Mucosa of descending colon (tissue), 3 donors: ENCODE measurements at regions of chr19 and their contacts with region 1.

Region 1: DNA sequence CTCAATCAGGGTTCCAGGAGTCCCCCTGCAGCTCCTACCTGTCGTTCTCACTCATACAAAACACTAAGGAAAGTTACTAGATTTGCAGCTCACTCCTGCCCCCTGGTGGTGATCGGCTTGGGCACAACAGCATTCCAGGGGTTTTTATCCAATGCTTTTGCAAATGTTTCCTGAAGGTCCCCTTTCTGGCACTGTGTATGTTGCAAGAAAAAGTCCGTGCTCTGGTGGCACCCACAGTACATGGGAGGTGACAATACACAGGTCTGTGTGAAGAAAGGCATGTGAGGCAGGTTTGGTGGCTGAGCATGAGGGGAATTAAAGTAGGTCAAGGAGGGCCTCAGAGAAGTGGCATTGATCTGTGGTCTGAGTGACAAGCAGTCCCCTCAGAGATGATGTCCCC is 8.6 kb upstream of the TYK2 start:
- DNase-seq: peak; percentile 78 to 99 (median 89)
- ATAC-seq: peak; percentile 87
- H3K4me3 ChIP-seq: no peak overlapping the region
- H3K4me1 ChIP-seq: no peaks in the 10 kb centered on the region
- CTCF ChIP-seq: peak; percentile 86

Region 2: GRCh38 chr19:10269333-10270179 is 119.4 kb before region 1 on chr19:
- intact Hi-C with region 1: loop called (anchors 2 kb)
- DNase-seq: peak; percentile 91 to 94 (median 92)
- ATAC-seq: peak; percentile 83
- H3K4me3 ChIP-seq: no peak overlapping the region
- H3K4me1 ChIP-seq: peaks cover 15% of the 10 kb centered on the region
- CTCF ChIP-seq: peak; percentile 83

Region 3: DNA sequence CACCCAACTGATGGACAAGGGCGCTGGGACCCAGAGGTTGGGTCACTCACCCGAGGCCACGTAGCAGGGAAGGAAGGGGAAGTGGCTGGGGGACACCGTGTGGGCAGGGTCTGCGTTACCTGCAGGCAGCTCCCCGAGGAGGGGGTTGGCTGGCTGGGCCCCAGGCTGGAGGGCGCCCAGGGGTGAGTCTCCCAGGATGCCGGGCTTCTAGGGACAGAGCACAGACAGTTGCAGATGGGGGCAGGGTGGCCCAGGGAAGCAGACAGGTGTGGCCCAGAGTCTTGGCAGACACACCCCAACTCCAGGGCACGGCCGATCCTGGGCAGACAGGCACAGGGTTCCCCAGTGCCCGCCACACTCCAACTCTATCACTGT is 67.6 kb before region 1 on chr19:
- intact Hi-C with region 1: no loop called
- DNase-seq: peak; percentile 84 to 89 (median 85)
- ATAC-seq: peak; percentile 92
- H3K4me3 ChIP-seq: no peak overlapping the region
- H3K4me1 ChIP-seq: peaks cover 25% of the 10 kb centered on the region
- CTCF ChIP-seq: no peak

Region 4: GRCh38 chr19:10431943-10432735 is 43.2 kb after region 1 on chr19:
- intact Hi-C with region 1: no loop called
- DNase-seq: peak; percentile 81 to 88 (median 86)
- ATAC-seq: peak; percentile 79
- H3K4me3 ChIP-seq: peak overlapping the region; percentile 11
- H3K4me1 ChIP-seq: peaks cover 18% of the 10 kb centered on the region
- CTCF ChIP-seq: no peak